HEK293 (cell line): ENCODE measurements at regions of chr18 and their contacts with region 1.

Region 1: GRCh38 chr18:33821503-33821902 is 243.5 kb downstream of the ASXL3 start:
- H3K4me3 ChIP-seq: no peak overlapping the region
- H3K27ac ChIP-seq: no peak overlapping the region
- H3K4me1 ChIP-seq: no peaks in the 10 kb centered on the region
- CTCF ChIP-seq: no peak

Region 2: GRCh38 chr18:32661486-32662299 is 1159.8 kb before region 1 on chr18:
- CTCF ChIA-PET with region 1: no interaction called
- POLR2A ChIA-PET with region 1: no interaction called
- H3K4me3 ChIP-seq: no peak overlapping the region
- H3K27ac ChIP-seq: no peak overlapping the region
- H3K4me1 ChIP-seq: no peaks in the 10 kb centered on the region
- CTCF ChIP-seq: no peak

Region 3: GRCh38 chr18:33627114-33627513 is 194.4 kb before region 1 on chr18:
- CTCF ChIA-PET with region 1: no interaction called
- POLR2A ChIA-PET with region 1: no interaction called
- H3K4me3 ChIP-seq: no peak overlapping the region
- H3K27ac ChIP-seq: no peak overlapping the region
- H3K4me1 ChIP-seq: no peaks in the 10 kb centered on the region; the same call in 1 of the 2 replicates
- CTCF ChIP-seq: no peak

Region 4: DNA sequence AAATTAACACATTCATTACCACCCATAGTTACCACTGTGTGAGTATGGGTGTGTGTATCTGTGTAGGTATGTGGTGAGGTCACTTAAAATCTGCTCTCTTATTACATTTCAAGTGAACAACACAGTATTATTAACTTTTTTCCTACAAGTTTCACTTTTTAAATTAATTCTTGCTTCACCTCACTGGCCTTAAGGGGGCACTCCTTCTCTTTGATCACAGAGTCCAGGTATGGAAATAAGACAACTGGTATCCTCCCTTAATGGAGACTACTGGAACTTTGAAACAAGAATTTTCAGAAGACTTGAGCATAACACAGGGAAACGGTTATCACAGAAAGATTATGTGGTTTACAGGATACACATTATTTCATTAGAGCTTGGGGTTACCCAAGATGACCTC is 12.3 kb after region 1 on chr18:
- CTCF ChIA-PET with region 1: interaction called, 14 read pairs
- POLR2A ChIA-PET with region 1: no interaction called
- H3K4me3 ChIP-seq: no peak overlapping the region
- H3K27ac ChIP-seq: no peak overlapping the region
- H3K4me1 ChIP-seq: no peaks in the 10 kb centered on the region
- CTCF ChIP-seq: no peak

Region 5: GRCh38 chr18:33849731-33850130 is 28.2 kb after region 1 on chr18:
- CTCF ChIA-PET with region 1: no interaction called
- POLR2A ChIA-PET with region 1: no interaction called
- H3K4me3 ChIP-seq: no peak overlapping the region
- H3K27ac ChIP-seq: no peak overlapping the region
- H3K4me1 ChIP-seq: no peaks in the 10 kb centered on the region
- CTCF ChIP-seq: no peak